Panc1 (cell line): ENCODE measurements at regions of chr9 and their contacts with region 1.

Region 1: GRCh38 chr9:32783169-32783891 is at the start of gene TMEM215:
- DNase-seq: no peak
- ATAC-seq: peak; percentile 66; the same call in 1 of the 2 replicates
- H3K4me3 ChIP-seq: no peak within 1 kb of the TSS
- H3K27ac ChIP-seq: no peak within 1 kb of the TSS
- H3K4me1 ChIP-seq: peaks cover 6% of the 10 kb centered on the region; the same call in 1 of the 2 replicates
- H3K27me3 ChIP-seq: peaks cover 53% of the 10 kb centered on the region
- CTCF ChIP-seq: no peak
- total RNA-seq, gene TMEM215: not detected

Region 2: GRCh38 chr9:32823551-32823950 is 40.2 kb after region 1 on chr9:
- CTCF ChIA-PET with region 1: no interaction called
- POLR2A ChIA-PET with region 1: no interaction called
- in situ Hi-C with region 1: no loop called
- intact Hi-C with region 1: no loop called
- DNase-seq: no peak
- ATAC-seq: no peak
- H3K4me3 ChIP-seq: no peak overlapping the region
- H3K27ac ChIP-seq: no peak overlapping the region
- H3K4me1 ChIP-seq: no peaks in the 10 kb centered on the region
- H3K27me3 ChIP-seq: peaks cover 15% of the 10 kb centered on the region
- CTCF ChIP-seq: no peak

Region 3: GRCh38 chr9:32839013-32839885 is 55.9 kb after region 1 on chr9:
- CTCF ChIA-PET with region 1: no interaction called
- POLR2A ChIA-PET with region 1: no interaction called
- in situ Hi-C with region 1: no loop called
- intact Hi-C with region 1: loop called (anchors 5 kb)
- DNase-seq: no peak
- ATAC-seq: no peak
- H3K4me3 ChIP-seq: no peak overlapping the region
- H3K27ac ChIP-seq: no peak overlapping the region
- H3K4me1 ChIP-seq: no peaks in the 10 kb centered on the region
- H3K27me3 ChIP-seq: peaks cover 9% of the 10 kb centered on the region
- CTCF ChIP-seq: no peak

Region 4: DNA sequence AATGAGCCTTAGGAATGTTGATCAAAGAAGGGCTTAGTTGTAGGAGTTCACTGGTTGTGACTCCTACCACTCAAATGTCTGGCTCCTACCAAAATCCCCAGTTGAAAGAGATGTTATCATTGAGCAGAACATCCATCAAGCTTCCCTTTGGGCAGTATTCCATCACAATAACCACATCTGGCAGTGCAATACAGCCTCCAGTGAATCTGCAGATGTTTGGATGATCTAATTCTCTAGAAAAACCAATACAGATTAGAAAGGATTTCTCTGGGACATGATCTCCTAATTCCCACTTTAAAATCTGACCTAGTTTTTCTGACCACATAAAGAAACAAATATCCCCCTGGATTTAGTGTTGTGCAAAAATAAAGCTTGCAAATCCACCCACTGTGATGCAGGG is 81.6 kb after region 1 on chr9:
- CTCF ChIA-PET with region 1: no interaction called
- POLR2A ChIA-PET with region 1: no interaction called
- in situ Hi-C with region 1: no loop called
- intact Hi-C with region 1: loop called (anchors 5 kb)
- DNase-seq: no peak
- ATAC-seq: no peak
- H3K4me3 ChIP-seq: no peak overlapping the region
- H3K27ac ChIP-seq: no peak overlapping the region
- H3K4me1 ChIP-seq: no peaks in the 10 kb centered on the region
- H3K27me3 ChIP-seq: peaks cover 8% of the 10 kb centered on the region
- CTCF ChIP-seq: no peak